Activated CD8-positive, alpha-beta T cell treated with anti-CD3 and anti-CD28 coated beads, Interleukin-2, amount 10 ng/mL, durations not matched to agents 7 days and 5 days (primary cell): ENCODE measurements at regions of chr4 and their contacts with region 1.

Region 1: DNA sequence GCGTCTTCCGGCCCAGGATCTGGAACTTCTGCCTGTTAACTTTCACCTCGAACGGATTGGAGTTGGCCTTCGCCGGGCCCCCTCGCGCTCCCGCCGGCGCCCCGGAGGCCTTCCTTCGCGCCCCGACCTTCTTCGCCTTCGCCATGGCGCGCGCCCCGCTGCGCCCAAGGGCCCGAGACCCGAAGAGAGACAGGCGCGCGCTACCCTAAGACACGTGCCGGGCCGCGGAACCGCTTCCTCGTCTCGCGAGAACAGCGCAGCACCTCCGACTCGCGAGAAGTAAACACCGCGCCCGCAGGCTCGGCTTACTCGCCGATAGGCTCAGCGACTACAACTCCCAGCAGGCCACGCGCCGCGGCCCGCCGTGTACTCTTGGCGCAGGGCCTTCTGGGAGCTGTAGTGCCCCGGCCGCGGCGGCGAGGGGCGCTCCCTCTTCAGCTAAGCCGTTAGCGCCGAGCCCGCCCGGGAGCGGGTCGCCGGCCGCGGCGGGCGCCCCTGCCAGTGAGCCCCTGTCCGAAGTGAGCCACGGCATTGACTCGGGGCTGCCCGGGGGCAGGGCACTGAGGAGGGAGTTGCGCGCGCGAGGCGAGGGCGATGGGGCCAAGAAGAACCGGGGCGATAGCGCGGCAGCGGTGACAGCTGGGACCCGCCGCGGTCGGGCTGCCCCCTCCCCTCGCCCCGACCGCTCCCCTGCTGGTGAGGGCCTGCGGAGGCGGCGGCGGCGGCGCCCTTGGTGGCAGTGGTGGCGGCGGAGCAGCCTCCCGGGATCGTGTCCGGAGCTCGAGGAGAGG is at the starts of genes GRK4 and NOP14:
- DNase-seq: peak; percentile 99
- ATAC-seq: peak; percentile 83
- H3K4me3 Mint-ChIP-seq: peak within 1 kb of the TSS; percentile 74
- H3K27ac Mint-ChIP-seq: peak within 1 kb of the TSS; percentile 95
- H3K4me1 Mint-ChIP-seq: peaks cover 38% of the 10 kb centered on the region
- H3K27me3 Mint-ChIP-seq: no peaks in the 10 kb centered on the region
- total RNA-seq, gene GRK4: 2.2 to 2.6 TPM
- total RNA-seq, gene NOP14: 47.6 to 52.3 TPM

Region 2: GRCh38 chr4:2934813-2935761 is 28.3 kb before region 1 on chr4:
- CTCF ChIA-PET with region 1: interaction called, 7 read pairs
- POLR2A ChIA-PET with region 1: interaction called, 18 read pairs
- DNase-seq: peak; percentile 97
- ATAC-seq: peak; percentile 75
- H3K4me3 Mint-ChIP-seq: peak overlapping the region; percentile 84
- H3K27ac Mint-ChIP-seq: peak overlapping the region; percentile 89
- H3K4me1 Mint-ChIP-seq: peaks cover 55% of the 10 kb centered on the region
- H3K27me3 Mint-ChIP-seq: no peaks in the 10 kb centered on the region

Region 3: DNA sequence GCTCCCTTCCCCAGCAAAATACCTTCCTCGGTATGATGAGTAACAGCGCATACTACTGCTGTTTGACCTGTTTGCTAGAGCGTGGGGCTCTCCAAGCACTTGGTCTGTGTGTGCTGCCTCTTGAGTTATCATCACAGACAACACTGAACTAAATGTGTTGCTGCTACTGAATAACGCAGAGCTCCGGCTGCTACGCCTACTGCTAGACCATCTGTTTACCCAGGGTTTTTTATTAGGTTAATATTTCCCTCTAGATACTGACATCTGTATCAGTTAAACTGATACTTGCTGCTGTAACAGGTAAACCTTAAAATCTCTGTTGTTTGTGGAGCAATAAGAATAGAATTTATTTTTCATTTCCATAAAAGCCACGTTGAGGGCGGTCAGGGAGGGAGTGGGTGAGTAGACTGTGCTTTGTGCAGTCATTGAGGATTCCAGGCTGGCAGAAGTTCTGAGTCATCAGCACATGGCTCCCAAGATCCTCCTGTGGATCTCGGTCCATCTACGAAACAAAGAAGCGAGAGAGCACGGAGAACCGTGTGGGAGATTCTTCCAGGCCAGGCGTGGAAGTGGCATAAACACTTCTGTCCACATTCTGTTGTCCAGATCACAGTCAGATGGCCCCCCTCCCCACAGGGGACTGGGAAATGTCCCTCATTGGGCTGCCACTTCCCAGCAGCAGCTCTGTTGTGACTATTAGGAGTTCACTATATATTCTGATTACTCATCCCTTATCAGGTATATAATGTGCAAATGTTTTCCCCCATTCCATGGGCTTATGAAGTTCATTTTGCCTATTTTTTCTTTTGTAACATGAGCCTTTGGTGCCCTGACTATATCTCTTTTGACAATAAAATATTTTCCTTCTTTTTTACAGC is 14.1 kb after region 1 on chr4:
- CTCF ChIA-PET with region 1: interaction called, 41 read pairs
- POLR2A ChIA-PET with region 1: no interaction called
- DNase-seq: no peak
- ATAC-seq: no peak
- H3K4me3 Mint-ChIP-seq: no peak overlapping the region
- H3K27ac Mint-ChIP-seq: no peak overlapping the region
- H3K4me1 Mint-ChIP-seq: peaks cover 2% of the 10 kb centered on the region
- H3K27me3 Mint-ChIP-seq: peaks cover 15% of the 10 kb centered on the region

Region 4: GRCh38 chr4:3041192-3042142 is 78.1 kb after region 1 on chr4:
- CTCF ChIA-PET with region 1: interaction called, 12 read pairs
- POLR2A ChIA-PET with region 1: interaction called, 7 read pairs
- DNase-seq: peak; percentile 62
- ATAC-seq: peak; percentile 60
- H3K4me3 Mint-ChIP-seq: peak overlapping the region; percentile 84
- H3K27ac Mint-ChIP-seq: peak overlapping the region; percentile 95
- H3K4me1 Mint-ChIP-seq: peaks cover 81% of the 10 kb centered on the region
- H3K27me3 Mint-ChIP-seq: peaks cover 6% of the 10 kb centered on the region